ENCODE measurements at regions of chr6 and their contacts with region 1.

Region 1: DNA sequence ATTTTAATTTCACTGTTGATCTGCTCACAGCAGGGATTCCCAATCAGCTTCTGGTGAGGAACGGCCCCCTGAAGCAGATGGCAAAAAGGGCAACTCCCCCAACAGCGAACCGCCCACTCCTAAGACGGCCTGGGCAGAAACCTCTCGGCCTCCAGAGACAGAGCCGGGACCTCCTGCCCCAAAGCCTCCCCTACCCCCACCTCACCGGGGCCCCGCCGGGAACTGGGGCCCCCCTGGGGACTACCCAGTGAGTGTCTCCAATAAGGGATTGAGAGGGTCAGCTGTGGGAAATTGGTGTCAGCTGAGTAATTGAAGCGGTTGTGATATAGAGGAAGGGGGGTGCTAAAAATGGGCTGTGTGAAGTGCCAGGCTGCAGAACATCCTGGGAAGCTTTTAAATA is 6.4 kb downstream of the PRRC2A start:
- DNase-seq: no peak
- H3K4me3 Mint-ChIP-seq: no peak overlapping the region
- H3K27ac Mint-ChIP-seq: no peak overlapping the region
- H3K4me1 Mint-ChIP-seq: peaks cover 18% of the 10 kb centered on the region
- H3K27me3 Mint-ChIP-seq: no peaks in the 10 kb centered on the region

Region 2: DNA sequence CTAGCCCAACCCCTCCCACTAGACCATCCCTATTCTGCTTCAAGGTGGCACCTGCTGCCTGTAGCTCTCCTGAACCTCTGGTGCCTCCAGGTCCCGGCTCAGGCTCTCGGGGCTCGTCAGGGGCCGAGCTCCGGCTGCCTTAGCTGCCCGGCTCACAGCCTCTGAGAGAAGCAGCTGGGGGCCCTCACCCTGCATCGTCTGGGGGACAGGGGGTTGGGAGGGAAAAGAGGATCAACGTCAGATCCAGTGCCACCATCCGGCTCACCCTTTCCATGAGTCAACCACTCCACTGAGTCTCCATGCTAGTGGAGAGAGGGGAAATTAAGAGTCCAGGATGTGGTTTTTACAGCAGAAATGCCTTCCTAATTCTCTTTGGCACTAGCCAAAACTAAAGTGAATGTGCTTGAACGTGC is 12.5 kb after region 1 on chr6:
- CTCF ChIA-PET with region 1: no interaction called
- POLR2A ChIA-PET with region 1: interaction called, 14 read pairs
- DNase-seq: no peak
- H3K4me3 Mint-ChIP-seq: no peak overlapping the region
- H3K27ac Mint-ChIP-seq: peak overlapping the region; percentile 54
- H3K4me1 Mint-ChIP-seq: peaks cover 8% of the 10 kb centered on the region
- H3K27me3 Mint-ChIP-seq: no peaks in the 10 kb centered on the region